Activated T-helper 2 cell treated with anti-CD3 and anti-CD28 coated beads, Interferon-gamma antibody, Interleukin-2, Interleukin-4, amounts not matched to agents 10 μg/mL and 5 μg/mL and 100 μg/mL, durations not matched to agents 14 hours and 24 hours and 36 hours (primary cell): ENCODE measurements at regions of chr4 and their contacts with region 1.

Region 1: GRCh38 chr4:42927946-42928345 is 35.4 kb downstream of the GRXCR1 start:
- DNase-seq: no peak
- H3K4me3 Mint-ChIP-seq: no peak overlapping the region
- H3K27ac Mint-ChIP-seq: no peak overlapping the region
- H3K4me1 Mint-ChIP-seq: no peaks in the 10 kb centered on the region
- H3K27me3 Mint-ChIP-seq: no peaks in the 10 kb centered on the region

Region 2: GRCh38 chr4:44522761-44523445 is 1595.0 kb after region 1 on chr4:
- intact Hi-C with region 1: loop called (anchors 10 kb)
- DNase-seq: no peak
- H3K4me3 Mint-ChIP-seq: no peak overlapping the region
- H3K27ac Mint-ChIP-seq: no peak overlapping the region
- H3K4me1 Mint-ChIP-seq: no peaks in the 10 kb centered on the region
- H3K27me3 Mint-ChIP-seq: no peaks in the 10 kb centered on the region